ENCODE measurements at regions of chr12 and their contacts with region 1.

Region 1: GRCh38 chr12:110742718-110743570 is at the start of gene PPP1CC:
- DNase-seq: peak; percentile 94
- ATAC-seq: peak; percentile 94
- H3K4me3 Mint-ChIP-seq: peak within 1 kb of the TSS; percentile 100
- H3K27ac Mint-ChIP-seq: peak within 1 kb of the TSS; percentile 98
- H3K4me1 Mint-ChIP-seq: peaks cover 43% of the 10 kb centered on the region
- H3K27me3 Mint-ChIP-seq: no peaks in the 10 kb centered on the region
- total RNA-seq, gene PPP1CC: 162 to 179 TPM

Region 2: DNA sequence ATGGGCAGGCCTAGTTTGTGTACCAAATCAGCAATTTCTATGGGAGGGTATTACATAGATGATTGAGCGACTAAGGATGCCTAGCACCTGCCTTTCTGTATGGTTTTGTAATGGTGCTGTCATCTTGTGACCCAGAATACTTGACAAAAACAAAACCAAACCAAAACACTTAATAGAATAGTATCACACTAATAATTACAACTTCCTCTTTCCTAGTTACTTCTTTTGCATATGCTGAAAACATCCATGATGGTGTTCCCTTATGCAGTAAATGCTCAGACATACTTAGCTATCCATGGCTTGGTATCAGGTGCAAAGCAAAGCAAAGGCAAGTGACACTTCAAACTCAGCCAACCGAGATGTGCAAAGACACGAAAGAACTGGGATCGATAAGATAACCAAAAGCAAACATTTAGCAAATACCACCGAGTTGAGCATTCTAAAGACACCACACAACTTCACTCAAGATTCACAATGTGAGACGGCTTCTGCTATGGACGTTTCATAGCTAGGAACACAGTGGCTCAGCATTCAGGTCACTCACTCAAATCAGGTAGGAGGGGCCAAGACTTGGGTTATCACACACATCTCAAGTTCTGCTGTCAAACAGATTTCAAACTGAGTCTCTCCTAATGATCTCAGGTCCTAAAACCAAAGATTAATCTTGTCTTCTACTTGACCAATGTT is 24.6 kb before region 1 on chr12:
- CTCF ChIA-PET with region 1: no interaction called
- POLR2A ChIA-PET with region 1: no interaction called
- DNase-seq: no peak
- ATAC-seq: no peak
- H3K4me3 Mint-ChIP-seq: no peak overlapping the region
- H3K27ac Mint-ChIP-seq: no peak overlapping the region
- H3K4me1 Mint-ChIP-seq: no peaks in the 10 kb centered on the region
- H3K27me3 Mint-ChIP-seq: no peaks in the 10 kb centered on the region

Region 3: DNA sequence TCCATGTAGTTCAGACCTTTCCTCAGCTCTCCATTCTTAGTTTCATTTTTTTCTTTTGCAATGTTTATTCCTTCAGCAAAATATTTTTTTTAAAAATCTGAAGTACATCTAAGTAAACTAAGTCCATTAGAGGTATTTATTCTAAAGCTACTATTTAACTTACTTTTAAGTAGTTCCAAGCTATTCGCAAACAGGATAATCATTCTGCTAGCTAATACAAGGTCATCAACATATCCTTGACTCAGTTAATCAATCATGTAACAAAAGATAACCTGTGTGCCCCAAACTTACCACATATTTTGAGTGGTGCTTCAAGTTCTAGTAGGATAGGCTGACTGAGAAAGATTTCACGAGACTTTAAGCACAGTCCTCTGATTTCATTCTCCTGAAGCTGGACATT is 11.5 kb before region 1 on chr12:
- CTCF ChIA-PET with region 1: interaction called, 16 read pairs
- POLR2A ChIA-PET with region 1: interaction called, 4 read pairs
- DNase-seq: no peak
- ATAC-seq: no peak
- H3K4me3 Mint-ChIP-seq: no peak overlapping the region
- H3K27ac Mint-ChIP-seq: no peak overlapping the region
- H3K4me1 Mint-ChIP-seq: peaks cover 62% of the 10 kb centered on the region
- H3K27me3 Mint-ChIP-seq: no peaks in the 10 kb centered on the region

Region 4: DNA sequence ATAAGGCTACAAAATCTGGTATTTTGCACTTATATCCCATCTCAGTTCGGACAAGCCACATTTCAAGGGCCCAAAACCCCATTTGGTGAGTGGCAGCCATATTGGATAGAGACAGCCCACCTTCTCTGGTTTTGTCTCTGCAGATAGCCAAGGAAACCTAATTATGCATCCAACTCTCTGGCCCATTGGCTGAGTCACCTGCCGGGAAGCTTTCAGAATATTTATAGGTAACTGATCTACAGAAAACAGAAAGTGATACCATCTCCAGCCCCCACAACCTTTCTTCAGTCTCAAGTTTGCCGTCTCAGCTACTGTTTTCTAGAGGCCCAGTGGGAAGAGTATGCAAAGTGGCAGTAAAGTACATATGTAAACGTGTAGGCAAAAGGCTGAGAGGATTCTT is 33.5 kb after region 1 on chr12:
- CTCF ChIA-PET with region 1: interaction called, 6 read pairs
- POLR2A ChIA-PET with region 1: interaction called, 28 read pairs
- DNase-seq: peak; percentile 55
- ATAC-seq: peak; percentile 59
- H3K4me3 Mint-ChIP-seq: peak overlapping the region; percentile 2
- H3K27ac Mint-ChIP-seq: peak overlapping the region; percentile 68
- H3K4me1 Mint-ChIP-seq: peaks cover 46% of the 10 kb centered on the region
- H3K27me3 Mint-ChIP-seq: no peaks in the 10 kb centered on the region